ENCODE measurements at regions of chr14 and their contacts with region 1.

Region 1: GRCh38 chr14:72254202-72254936 is 322.1 kb downstream of the RGS6 start:
- DNase-seq: no peak
- H3K4me3 ChIP-seq: no peak overlapping the region
- CTCF ChIP-seq: no peak

Region 2: GRCh38 chr14:71776471-71777360 is 477.7 kb before region 1 on chr14:
- in situ Hi-C with region 1: no loop called
- DNase-seq: peak; percentile 84
- H3K4me3 ChIP-seq: no peak overlapping the region
- CTCF ChIP-seq: no peak

Region 3: DNA sequence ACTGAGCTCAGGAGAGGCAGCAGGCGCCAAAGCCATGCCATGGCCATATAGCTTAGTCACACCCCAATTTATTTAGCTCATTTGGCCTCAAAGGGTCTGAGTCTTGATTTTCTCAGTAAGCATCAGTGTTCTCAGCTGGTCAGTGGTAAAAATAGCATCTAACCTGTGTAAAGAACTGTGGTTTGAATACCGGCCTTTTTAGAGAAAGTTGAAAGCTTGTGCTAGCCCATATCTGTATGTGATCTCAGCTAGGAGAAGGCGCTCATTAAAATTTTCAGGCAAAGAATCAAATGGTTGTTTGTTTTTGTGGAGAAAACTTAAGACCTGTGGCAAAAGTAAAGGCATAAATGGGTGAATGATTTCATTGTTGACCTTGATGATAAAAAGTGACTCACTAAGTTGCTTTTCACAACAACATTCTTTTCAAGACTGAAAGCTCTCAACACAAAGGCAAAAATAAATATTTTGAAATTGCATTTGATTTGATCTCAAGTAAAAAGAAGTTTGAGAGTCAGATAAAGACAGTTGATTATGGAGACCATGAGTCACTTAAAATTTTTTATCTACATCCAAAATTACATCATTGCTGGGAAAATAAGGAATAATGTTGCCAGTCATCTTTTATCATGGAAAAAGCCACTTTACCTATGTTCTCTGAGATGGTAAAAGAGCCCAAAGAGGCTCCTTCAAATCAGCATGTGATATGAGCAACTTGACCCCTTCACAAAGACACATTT is 450.7 kb before region 1 on chr14:
- in situ Hi-C with region 1: no loop called
- DNase-seq: peak; percentile 66
- H3K4me3 ChIP-seq: no peak overlapping the region
- CTCF ChIP-seq: no peak

Region 4: DNA sequence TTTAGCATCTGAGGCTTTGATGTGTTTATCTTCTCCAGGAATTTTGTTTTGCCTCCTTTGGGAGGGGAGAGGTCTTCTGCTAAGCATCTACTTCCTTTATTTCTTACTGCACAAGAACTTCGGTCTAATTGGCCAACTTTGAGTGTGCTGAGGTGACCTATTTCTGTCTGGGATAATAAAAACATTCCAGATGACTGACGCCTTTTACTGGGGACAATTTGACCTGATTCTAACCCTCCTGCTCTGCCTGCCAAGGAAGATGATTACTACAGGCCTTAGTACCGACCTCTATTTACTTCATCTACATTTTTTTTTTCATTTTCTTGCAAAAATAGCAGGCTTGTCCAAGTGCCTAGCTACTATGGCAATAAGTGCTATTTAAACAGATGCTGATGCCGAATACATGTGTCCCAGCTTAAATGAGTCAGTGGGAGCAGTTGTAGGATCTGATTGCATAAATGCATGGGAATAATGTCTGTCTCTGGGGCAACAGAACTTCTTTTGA is 67.9 kb before region 1 on chr14:
- in situ Hi-C with region 1: no loop called
- DNase-seq: no peak
- H3K4me3 ChIP-seq: no peak overlapping the region
- CTCF ChIP-seq: no peak

Region 5: DNA sequence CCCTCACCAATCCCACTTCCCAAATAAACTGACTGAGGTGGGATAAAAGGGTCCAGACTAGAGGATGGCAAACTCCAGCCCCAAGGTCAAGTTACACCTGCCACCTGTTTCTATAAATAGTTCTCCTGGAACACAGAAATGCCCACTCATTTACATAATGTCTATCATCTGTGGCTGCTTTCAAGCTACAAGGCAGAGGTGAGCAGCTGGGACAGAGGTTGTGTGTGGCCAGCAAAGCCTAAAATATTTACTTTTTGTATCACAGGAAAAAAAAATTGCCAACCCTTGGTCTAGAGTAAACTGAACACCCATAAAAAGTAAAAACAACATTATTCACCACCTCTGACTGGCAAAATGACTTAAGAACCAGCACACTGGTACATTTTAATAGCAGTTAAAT is 52.7 kb before region 1 on chr14:
- in situ Hi-C with region 1: loop called (anchors 5 kb)
- DNase-seq: no peak
- H3K4me3 ChIP-seq: no peak overlapping the region
- CTCF ChIP-seq: no peak